PC-9 (cell line): ENCODE measurements at regions of chr13 and their contacts with region 1.

Region 1: DNA sequence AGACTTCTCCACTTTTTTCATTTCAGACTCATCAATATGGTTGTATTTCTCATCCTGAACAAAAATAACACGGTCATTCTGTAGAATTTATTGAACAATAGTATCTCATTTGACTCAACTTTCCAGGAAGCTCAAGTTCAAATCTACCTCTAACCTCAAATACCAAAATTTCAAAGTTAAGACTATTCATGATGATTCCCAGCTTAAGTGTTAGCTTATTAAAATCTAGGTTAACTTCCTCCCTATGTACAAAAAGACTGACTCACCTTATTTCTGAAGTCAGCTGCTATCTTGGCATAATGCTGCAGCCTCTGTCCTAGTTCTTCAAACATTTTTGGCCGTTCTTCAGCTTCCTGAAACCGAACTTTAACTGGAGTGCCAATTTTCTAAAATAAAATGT is 23.2 kb downstream of the HSPH1 start:
- DNase-seq: no peak
- H3K4me3 ChIP-seq: no peak overlapping the region
- H3K27ac ChIP-seq: no peak overlapping the region
- H3K4me1 ChIP-seq: no peaks in the 10 kb centered on the region
- H3K27me3 ChIP-seq: no peaks in the 10 kb centered on the region
- CTCF ChIP-seq: no peak

Region 2: GRCh38 chr13:30896930-30897329 is 241.6 kb before region 1 on chr13:
- CTCF ChIA-PET with region 1: no interaction called
- POLR2A ChIA-PET with region 1: interaction called, 11 read pairs
- intact Hi-C with region 1: no loop called
- DNase-seq: no peak
- H3K4me3 ChIP-seq: no peak overlapping the region
- H3K27ac ChIP-seq: no peak overlapping the region
- H3K4me1 ChIP-seq: peaks cover 11% of the 10 kb centered on the region; the same call in 1 of the 2 replicates
- H3K27me3 ChIP-seq: peaks cover 12% of the 10 kb centered on the region; the same call in 1 of the 2 replicates
- CTCF ChIP-seq: no peak

Region 3: DNA sequence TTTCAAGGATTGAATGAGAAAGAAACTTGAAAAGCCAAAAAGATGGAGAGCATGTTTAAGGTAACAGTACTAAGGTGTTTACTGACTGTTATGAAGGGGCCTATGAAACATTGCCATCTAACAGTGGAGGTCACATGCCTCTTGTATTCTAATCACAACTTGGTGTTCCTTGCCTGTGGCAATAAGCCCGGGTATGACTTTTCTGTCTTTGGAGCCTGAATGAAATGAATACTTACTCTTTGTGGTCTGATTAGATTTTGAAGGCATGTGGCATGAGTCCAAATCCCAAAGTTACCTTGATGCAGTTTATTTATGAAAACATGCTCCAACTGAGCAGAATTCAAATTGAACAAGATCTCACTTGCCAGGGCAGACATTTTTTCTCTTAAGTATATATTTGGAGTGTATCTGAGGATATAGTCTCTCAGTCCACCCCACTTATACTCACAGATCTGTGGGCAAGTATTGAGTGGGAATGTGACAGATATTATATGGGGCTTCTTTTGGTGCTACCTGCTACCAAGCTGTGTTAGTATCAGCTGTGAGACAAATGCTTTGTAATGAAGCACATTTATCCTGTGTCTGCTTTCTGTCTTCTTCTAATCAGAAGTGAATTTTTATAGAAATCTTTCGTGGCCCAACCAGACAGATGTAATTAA is 128.7 kb after region 1 on chr13:
- CTCF ChIA-PET with region 1: no interaction called
- POLR2A ChIA-PET with region 1: no interaction called
- intact Hi-C with region 1: no loop called
- DNase-seq: no peak
- H3K4me3 ChIP-seq: no peak overlapping the region
- H3K27ac ChIP-seq: no peak overlapping the region
- H3K4me1 ChIP-seq: no peaks in the 10 kb centered on the region
- H3K27me3 ChIP-seq: no peaks in the 10 kb centered on the region
- CTCF ChIP-seq: no peak